Right ventricle myocardium inferior (tissue), 1 donor: ENCODE measurements at regions of chr20 and their contacts with region 1.

Region 1: GRCh38 chr20:41078329-41078728 is 49.7 kb downstream of the TOP1 start:
- DNase-seq: no peak
- ATAC-seq: no peak

Region 2: GRCh38 chr20:40990542-40991120 is 87.7 kb before region 1 on chr20:
- intact Hi-C with region 1: loop called (anchors 2 kb)
- DNase-seq: peak; percentile 76
- ATAC-seq: peak; percentile 98

Region 3: DNA sequence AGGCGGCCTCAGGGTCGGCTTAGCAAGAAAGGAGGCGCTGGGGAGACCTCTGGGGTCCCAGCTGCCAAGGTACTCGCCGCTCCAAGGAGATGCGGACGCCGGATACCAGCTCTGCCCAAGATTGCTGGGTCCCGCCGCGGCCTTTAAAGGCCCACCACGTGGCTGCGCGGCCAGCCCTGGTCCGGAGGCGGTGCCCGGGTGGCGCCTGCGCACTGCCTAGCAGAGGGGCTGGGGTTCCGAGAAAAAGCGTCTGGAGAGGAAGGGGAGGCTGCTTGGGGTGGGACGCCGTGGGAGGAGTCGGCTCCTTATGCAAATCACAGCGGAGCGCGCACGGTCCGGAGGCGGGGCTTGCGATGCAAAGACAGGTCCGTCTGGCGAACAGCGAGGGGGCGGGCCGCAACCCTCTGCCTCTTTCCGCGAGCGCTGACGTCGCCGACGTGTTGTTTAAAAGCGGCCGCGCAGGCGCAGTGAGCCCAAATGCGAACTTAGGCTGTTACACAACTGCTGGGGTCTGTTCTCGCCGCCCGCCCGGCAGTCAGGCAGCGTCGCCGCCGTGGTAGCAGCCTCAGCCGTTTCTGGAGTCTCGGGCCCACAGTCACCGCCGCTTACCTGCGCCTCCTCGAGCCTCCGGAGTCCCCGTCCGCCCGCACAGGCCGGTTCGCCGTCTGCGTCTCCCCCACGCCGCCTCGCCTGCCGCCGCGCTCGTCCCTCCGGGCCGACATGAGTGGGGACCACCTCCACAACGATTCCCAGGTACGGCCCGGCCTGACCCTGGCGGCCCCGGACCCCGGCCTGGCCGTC is 49.8 kb before region 1 on chr20 and contains the start of gene TOP1:
- intact Hi-C with region 1: loop called (anchors 5 kb)
- DNase-seq: peak; percentile 100
- ATAC-seq: peak; percentile 98
- total RNA-seq, gene TOP1: 23.9 TPM

Region 4: GRCh38 chr20:41149679-41150131 is 71.4 kb after region 1 on chr20:
- intact Hi-C with region 1: no loop called
- DNase-seq: no peak
- ATAC-seq: no peak

Region 5: GRCh38 chr20:41185013-41185757 is 106.9 kb after region 1 on chr20:
- intact Hi-C with region 1: no loop called
- DNase-seq: no peak
- ATAC-seq: peak; percentile 47